AG04450 (cell line): ENCODE measurements at regions of chr14 and their contacts with region 1.

Region 1: DNA sequence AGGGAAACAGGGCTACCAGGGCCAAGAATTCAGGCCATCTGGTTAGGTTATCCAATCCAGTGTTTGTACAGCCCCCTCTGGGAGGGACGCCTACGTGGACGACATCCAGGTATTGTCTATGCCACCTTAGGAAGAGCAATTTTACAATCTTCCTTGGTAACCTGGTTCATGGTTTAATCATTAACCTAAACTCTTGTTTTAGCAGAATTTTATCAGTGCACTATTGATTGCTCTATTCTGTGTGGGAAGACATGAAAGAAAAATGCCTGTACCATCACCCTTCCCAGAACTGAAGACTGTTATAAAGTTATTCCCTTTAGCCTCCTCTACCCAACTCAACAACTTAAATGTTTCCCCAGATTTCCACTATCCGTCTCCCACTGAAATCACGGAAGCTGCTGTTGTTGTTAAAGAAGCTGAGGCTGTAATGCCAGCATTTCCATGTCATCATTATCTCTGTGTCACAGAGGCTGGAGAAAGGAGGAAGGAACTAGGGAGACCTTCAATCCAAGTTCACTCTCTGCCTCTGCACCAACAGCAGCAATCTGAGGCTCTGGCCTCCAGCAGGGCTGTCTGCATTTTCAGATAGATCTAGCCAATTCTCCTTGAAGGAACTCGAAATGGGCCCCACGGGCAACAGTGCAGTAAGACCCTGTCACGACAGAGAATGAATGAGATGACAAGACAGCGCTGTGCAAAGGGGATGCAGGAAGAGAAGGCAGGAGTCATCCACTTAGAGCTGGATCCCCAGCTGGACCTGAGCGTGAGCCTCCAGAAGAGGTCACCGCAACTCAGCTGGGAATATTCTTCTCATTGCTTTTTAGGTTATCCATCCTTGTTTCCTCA is 183.4 kb upstream of the GZMB start:
- DNase-seq: no peak
- H3K4me3 ChIP-seq: no peak overlapping the region
- H3K27ac ChIP-seq: no peak overlapping the region
- H3K27me3 ChIP-seq: no peaks in the 10 kb centered on the region
- CTCF ChIP-seq: peak; percentile 43

Region 2: DNA sequence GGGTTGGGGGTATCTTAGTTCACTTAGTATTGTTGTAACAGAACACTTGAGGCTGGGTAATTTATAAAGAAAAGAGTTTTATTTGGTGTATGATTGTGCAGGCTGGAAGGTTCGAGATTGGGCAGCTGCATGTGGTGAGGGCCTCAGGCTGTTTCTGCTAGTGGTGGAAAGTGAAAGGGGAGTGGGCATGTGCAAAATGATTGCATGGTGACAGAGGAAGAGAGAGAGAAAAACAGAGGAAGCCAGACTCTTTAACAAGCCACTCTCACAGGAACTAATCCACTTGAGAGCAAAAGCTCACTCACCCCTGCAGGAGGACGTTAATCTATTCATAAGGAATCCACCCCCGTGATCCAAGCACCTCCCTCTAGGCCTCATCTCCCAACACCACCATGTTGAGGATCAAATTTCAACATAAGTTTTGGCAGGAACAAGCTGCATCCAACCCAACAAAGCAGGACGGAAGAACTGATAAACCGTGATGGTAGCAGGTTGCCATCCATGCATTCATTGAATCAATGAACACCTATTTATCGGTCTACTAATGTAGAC is 18.4 kb before region 1 on chr14:
- CTCF ChIA-PET with region 1: no interaction called
- POLR2A ChIA-PET with region 1: no interaction called
- DNase-seq: no peak
- H3K4me3 ChIP-seq: no peak overlapping the region
- H3K27ac ChIP-seq: no peak overlapping the region
- H3K27me3 ChIP-seq: no peaks in the 10 kb centered on the region
- CTCF ChIP-seq: no peak

Region 3: GRCh38 chr14:24837280-24838046 is 20.0 kb after region 1 on chr14:
- CTCF ChIA-PET with region 1: no interaction called
- POLR2A ChIA-PET with region 1: no interaction called
- DNase-seq: no peak
- H3K4me3 ChIP-seq: no peak overlapping the region
- H3K27ac ChIP-seq: no peak overlapping the region
- H3K27me3 ChIP-seq: no peaks in the 10 kb centered on the region
- CTCF ChIP-seq: no peak

Region 4: DNA sequence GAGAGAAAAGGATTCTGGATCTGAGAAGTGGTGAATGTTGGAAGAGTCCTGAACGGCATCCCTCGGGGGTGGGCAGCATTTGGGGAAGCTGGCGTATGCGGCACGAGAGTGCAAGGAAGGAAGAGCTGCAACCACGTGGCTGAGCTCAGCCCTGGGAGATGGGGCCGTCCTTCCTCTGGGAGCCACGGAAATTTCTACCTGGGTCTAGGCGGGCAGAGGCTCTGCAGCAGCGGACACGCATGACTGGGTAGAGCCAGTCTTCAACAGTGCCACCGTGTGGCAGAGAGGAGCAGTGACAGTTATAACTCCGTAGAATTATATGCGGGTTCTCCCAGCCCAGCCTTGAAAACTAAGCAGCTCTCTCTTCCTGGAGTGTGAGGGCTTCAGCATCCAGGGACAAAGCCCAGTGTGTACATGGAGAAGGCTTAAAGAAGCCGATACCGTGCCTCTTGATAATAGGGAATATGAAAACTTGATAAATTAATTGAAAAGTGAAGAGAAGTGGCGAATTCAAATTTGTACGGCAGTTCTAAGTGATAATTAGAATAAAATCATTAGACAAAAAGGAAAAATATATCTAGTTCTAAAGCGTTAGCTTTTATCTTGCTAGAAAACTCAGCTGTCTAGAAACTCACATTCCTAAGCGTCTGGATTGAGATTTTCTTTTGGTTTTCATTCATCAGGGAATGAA is 315.4 kb after region 1 on chr14:
- CTCF ChIA-PET with region 1: interaction called, 10 read pairs
- POLR2A ChIA-PET with region 1: no interaction called
- DNase-seq: no peak
- H3K4me3 ChIP-seq: no peak overlapping the region
- H3K27ac ChIP-seq: no peak overlapping the region
- H3K27me3 ChIP-seq: no peaks in the 10 kb centered on the region
- CTCF ChIP-seq: peak; percentile 67